ENCODE measurements at regions of chr5 and their contacts with region 1.

Region 1: GRCh38 chr5:40879163-40879942 is 29.9 kb upstream of the C7 start:
- DNase-seq: no peak
- ATAC-seq: no peak
- H3K4me3 ChIP-seq: no peak overlapping the region
- H3K27ac ChIP-seq: no peak overlapping the region
- H3K4me1 ChIP-seq: no peaks in the 10 kb centered on the region
- H3K27me3 ChIP-seq: no peaks in the 10 kb centered on the region

Region 2: GRCh38 chr5:40437452-40437861 is 441.9 kb before region 1 on chr5:
- intact Hi-C with region 1: no loop called
- DNase-seq: no peak
- ATAC-seq: no peak
- H3K4me3 ChIP-seq: no peak overlapping the region
- H3K27ac ChIP-seq: no peak overlapping the region
- H3K4me1 ChIP-seq: no peaks in the 10 kb centered on the region
- H3K27me3 ChIP-seq: no peaks in the 10 kb centered on the region

Region 3: GRCh38 chr5:40755407-40756365 is 123.7 kb before region 1 on chr5 and contains the start of gene TTC33:
- intact Hi-C with region 1: loop called in 1 of 4 experiments (anchors 10 kb)
- DNase-seq: peak; percentile 97 to 99 (median 97)
- ATAC-seq: peak; percentile 98
- H3K4me3 ChIP-seq: peak within 1 kb of the TSS; percentile 90
- H3K27ac ChIP-seq: peak within 1 kb of the TSS; percentile 74
- H3K4me1 ChIP-seq: no peaks in the 10 kb centered on the region
- H3K27me3 ChIP-seq: no peaks in the 10 kb centered on the region
- total RNA-seq, gene TTC33: 14.9 to 17.5 (median 16.7) TPM